CD14-positive monocyte (primary cell): ENCODE measurements at regions of chr20 and their contacts with region 1.

Region 1: GRCh38 chr20:266596-267562 is 9.4 kb downstream of the DEFB132 start:
- DNase-seq: peak; percentile 63 to 76 (median 71)
- H3K4me3 ChIP-seq: peak overlapping the region; percentile 6 to 72 (median 29)
- H3K4me3 Mint-ChIP-seq: peak overlapping the region; percentile 78 to 95
- H3K27ac ChIP-seq: no peak overlapping the region
- H3K27ac Mint-ChIP-seq: peak overlapping the region in 4 of 7 donors; percentile 5 to 78 (median 42)
- H3K4me1 ChIP-seq: peaks cover 6% of the 10 kb centered on the region in 2 donors
- H3K4me1 Mint-ChIP-seq: peaks cover 8% of the 10 kb centered on the region
- H3K27me3 ChIP-seq: peaks cover 0 to 8% of the 10 kb centered on the region in 2 donors
- H3K27me3 Mint-ChIP-seq: peaks cover 8 to 14% (median 12%) of the 10 kb centered on the region in 3 donors
- CTCF ChIP-seq: peak; percentile 89

Region 2: DNA sequence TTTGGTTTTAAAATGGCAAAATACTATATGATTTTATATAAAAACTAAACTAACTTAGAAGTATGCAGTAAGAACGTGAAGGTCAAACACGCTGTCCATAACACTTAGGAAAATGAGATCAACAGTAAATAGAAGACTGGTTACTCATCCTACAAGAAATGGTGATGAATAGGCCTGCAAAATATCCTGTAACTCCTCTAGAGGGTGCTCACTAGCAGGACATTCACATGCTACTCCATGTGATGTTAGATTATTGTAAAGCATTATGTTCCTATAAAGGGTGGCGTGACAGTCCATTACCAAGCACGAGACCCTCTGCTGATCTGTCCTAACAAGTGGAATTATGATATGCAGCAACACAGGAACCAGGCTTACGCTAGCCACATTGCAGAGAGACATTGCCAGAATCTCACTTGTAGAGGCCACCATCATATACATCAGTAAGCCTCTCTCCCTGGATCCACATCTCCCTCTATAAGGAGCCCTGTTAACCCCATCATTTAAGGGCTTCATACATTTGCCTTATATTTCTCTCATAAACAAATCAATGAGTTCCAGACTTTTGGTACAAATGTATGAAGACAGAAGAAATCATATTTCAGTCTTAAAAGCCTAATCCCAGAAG is 57.8 kb before region 1 on chr20:
- intact Hi-C with region 1: loop called (anchors 2 to 5 kb)
- DNase-seq: peak; percentile 35 to 56 (median 52)
- H3K4me3 ChIP-seq: no peak overlapping the region
- H3K4me3 Mint-ChIP-seq: no peak overlapping the region
- H3K27ac ChIP-seq: no peak overlapping the region
- H3K27ac Mint-ChIP-seq: no peak overlapping the region
- H3K4me1 ChIP-seq: no peaks in the 10 kb centered on the region
- H3K4me1 Mint-ChIP-seq: no peaks in the 10 kb centered on the region
- H3K27me3 ChIP-seq: no peaks in the 10 kb centered on the region
- H3K27me3 Mint-ChIP-seq: peaks cover 0 to 2% (median 0%) of the 10 kb centered on the region in 3 donors
- CTCF ChIP-seq: peak; percentile 77